ENCODE measurements at regions of chr7 and their contacts with region 1.

Region 1: GRCh38 chr7:149460493-149461277 is at the start of gene ZNF777:
- DNase-seq: peak; percentile 83
- ATAC-seq: peak; percentile 97
- H3K4me3 Mint-ChIP-seq: peak within 1 kb of the TSS; percentile 86
- H3K27ac Mint-ChIP-seq: peak within 1 kb of the TSS; percentile 59
- H3K4me1 Mint-ChIP-seq: peaks cover 15% of the 10 kb centered on the region
- H3K27me3 Mint-ChIP-seq: peaks cover 2% of the 10 kb centered on the region
- total RNA-seq, gene ZNF777: 14.1 to 14.9 TPM

Region 2: GRCh38 chr7:149624419-149625339 is 164.0 kb after region 1 on chr7:
- POLR2A ChIA-PET with region 1: interaction called, 14 read pairs
- DNase-seq: peak; percentile 93
- ATAC-seq: peak; percentile 95
- H3K4me3 Mint-ChIP-seq: peak overlapping the region; percentile 95
- H3K27ac Mint-ChIP-seq: peak overlapping the region; percentile 91
- H3K4me1 Mint-ChIP-seq: peaks cover 38% of the 10 kb centered on the region
- H3K27me3 Mint-ChIP-seq: peaks cover 13% of the 10 kb centered on the region